ENCODE measurements at regions of chr19 and their contacts with region 1.

Region 1: DNA sequence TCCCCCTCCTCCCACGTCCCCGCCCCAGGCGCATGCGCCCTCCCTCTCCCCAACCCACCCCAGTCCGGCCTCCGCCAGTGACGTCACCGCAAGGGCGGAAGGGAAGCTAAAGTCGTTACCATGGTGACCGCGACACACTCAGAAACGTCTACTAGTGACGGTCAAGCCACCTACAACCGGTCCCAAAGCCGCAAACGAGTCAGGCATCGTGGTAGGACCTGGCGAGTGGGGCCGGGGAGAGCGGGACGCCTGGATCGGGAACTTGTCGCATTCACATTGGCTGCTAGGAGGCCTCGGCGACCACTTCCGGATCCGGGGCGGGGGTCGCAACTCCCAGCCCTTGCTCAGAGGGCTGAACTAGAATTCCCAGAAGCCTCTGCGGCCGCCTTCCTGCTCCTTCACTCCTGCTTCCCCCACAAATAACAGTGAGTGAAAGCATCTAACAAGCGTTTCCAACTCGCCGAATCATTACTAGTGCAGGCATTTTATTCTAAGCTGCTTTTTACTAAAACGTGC is at the start of gene ZSCAN5A:
- DNase-seq: peak; percentile 89
- ATAC-seq: peak; percentile 87
- H3K4me3 ChIP-seq: peak within 1 kb of the TSS; percentile 92
- H3K27ac ChIP-seq: peak within 1 kb of the TSS; percentile 98
- H3K4me1 ChIP-seq: peaks cover 3% of the 10 kb centered on the region
- H3K27me3 ChIP-seq: no peaks in the 10 kb centered on the region
- CTCF ChIP-seq: no peak
- EP300 ChIP-seq: no peak
- POLR2A ChIP-seq: peak; percentile 90
- RAD21 ChIP-seq: no peak
- polyA plus RNA-seq, gene ZSCAN5A: 5.5 to 6.6 TPM

Region 2: DNA sequence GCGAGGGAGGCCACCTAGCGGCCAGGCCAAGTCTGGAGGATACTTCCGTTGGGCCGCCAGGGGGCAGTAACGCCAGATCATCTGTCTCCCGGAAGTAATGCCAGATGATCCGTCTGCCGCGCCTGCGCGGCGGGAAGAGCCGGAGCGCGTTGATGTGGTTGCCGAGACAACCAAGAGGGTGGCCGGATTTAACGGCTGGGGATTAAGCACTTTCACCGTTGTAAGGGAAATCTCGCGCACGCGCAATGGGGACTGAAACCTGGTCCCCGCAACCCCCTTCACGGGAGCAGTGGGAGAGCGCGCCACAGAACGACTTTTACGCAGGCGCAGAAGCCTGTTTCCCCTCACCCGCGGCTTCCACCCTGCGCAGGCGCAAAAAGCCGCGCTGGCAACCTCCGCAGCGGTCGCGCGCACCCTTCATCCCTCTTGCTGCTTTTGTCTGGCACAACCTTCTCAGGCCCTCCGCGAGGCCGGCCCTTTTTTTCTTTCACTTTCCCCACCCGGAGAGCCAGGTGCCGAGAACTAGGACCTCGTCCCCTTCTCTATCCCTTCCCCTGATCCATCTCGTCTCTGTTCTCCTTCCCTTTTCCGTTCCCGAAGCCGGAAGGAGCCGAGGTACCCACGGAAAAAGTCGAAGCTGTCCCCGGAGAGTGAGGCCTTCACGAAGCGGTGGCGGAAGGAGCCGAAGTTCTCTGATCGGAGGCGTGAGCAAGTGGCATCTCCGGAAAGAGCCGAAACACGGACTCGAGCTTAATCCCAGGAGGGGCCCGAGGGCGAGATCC is 660.7 kb before region 1 on chr19:
- CTCF ChIA-PET with region 1: interaction called, 3 read pairs
- POLR2A ChIA-PET with region 1: interaction called, 6 read pairs
- RAD21 ChIA-PET with region 1: no interaction called
- SMC1A ChIA-PET with region 1: no interaction called
- in situ Hi-C with region 1: loop called (anchors 5 kb)
- intact Hi-C with region 1: no loop called
- DNase-seq: peak; percentile 95
- ATAC-seq: peak; percentile 83
- H3K4me3 ChIP-seq: peak overlapping the region; percentile 75
- H3K27ac ChIP-seq: peak overlapping the region; percentile 100
- H3K4me1 ChIP-seq: peaks cover 19% of the 10 kb centered on the region
- H3K27me3 ChIP-seq: no peaks in the 10 kb centered on the region
- CTCF ChIP-seq: peak; percentile 100; a peak in 5 of 6 replicates
- EP300 ChIP-seq: no peak
- POLR2A ChIP-seq: peak; percentile 80
- RAD21 ChIP-seq: peak; percentile 57; the same call in 1 of the 2 replicates

Region 3: GRCh38 chr19:56080669-56081401 is 233.8 kb before region 1 on chr19:
- CTCF ChIA-PET with region 1: interaction called, 9 read pairs
- POLR2A ChIA-PET with region 1: no interaction called
- RAD21 ChIA-PET with region 1: no interaction called
- SMC1A ChIA-PET with region 1: no interaction called
- in situ Hi-C with region 1: loop called (anchors 5 kb)
- intact Hi-C with region 1: loop called (anchors 1 kb)
- DNase-seq: peak; percentile 38
- ATAC-seq: peak; percentile 89
- H3K4me3 ChIP-seq: peak overlapping the region; percentile 61; the same call in 1 of the 2 replicates
- H3K27ac ChIP-seq: peak overlapping the region; percentile 3; the same call in 1 of the 2 replicates
- H3K4me1 ChIP-seq: peaks cover 5% of the 10 kb centered on the region; the same call in 1 of the 2 replicates
- H3K27me3 ChIP-seq: no peaks in the 10 kb centered on the region
- CTCF ChIP-seq: peak; percentile 64 to 69 (median 64)
- EP300 ChIP-seq: peak; percentile 57 to 58; a peak in 1 of 4 replicates
- POLR2A ChIP-seq: peak; percentile 62; the same call in 1 of the 2 replicates
- RAD21 ChIP-seq: peak; percentile 60

Region 4: DNA sequence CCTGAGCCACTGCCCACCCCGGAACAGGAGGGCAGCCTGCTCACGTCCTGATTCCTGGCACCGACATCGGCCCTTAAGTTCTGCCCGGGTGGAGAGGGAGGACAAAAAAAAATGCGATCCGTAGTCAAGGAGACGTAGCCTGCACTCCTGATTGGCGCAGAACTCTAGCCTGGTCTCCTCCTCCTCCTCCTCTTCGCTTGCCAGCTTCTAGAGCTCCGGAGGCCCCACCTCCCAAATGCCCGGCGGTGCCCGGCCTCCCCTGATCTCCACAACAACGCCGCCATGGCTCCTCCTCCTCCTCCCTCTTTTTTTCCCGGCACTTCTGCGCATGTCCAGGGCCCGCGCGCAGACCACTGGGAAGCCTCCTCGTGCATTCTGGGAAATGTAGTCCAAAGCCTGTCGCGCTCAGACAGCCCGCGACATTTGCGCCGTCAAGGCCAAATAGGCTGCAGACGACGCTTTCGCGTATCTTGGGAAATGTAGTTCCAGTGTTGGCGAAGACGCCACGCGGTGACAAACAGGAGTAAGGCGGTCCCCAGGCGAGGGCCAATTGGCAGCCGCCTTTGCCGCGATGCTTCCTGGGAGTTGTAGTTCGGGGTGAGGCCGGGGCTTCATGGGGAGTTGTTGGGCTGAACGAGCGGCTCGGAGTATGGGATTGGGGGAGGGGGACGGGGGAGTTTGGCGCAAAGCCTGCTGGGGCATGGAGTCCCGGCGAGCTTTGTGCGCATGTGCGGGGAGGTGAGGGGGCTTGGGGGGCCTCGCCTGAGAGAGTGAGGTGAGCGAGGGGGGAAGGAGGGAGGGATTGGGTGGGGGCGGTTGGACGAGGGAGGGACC is 173.8 kb before region 1 on chr19 and contains the start of gene ZNF444:
- CTCF ChIA-PET with region 1: interaction called, 3 read pairs
- POLR2A ChIA-PET with region 1: no interaction called
- RAD21 ChIA-PET with region 1: no interaction called
- SMC1A ChIA-PET with region 1: no interaction called
- in situ Hi-C with region 1: no loop called
- intact Hi-C with region 1: loop called (anchors 1 kb)
- DNase-seq: peak; percentile 97
- ATAC-seq: peak; percentile 96
- H3K4me3 ChIP-seq: peak within 1 kb of the TSS; percentile 75
- H3K27ac ChIP-seq: peak within 1 kb of the TSS; percentile 82
- H3K4me1 ChIP-seq: peaks cover 15% of the 10 kb centered on the region
- H3K27me3 ChIP-seq: no peaks in the 10 kb centered on the region
- CTCF ChIP-seq: no peak
- EP300 ChIP-seq: no peak
- POLR2A ChIP-seq: peak; percentile 76
- RAD21 ChIP-seq: no peak
- polyA plus RNA-seq, gene ZNF444: 0.45 to 0.99 TPM

Region 5: DNA sequence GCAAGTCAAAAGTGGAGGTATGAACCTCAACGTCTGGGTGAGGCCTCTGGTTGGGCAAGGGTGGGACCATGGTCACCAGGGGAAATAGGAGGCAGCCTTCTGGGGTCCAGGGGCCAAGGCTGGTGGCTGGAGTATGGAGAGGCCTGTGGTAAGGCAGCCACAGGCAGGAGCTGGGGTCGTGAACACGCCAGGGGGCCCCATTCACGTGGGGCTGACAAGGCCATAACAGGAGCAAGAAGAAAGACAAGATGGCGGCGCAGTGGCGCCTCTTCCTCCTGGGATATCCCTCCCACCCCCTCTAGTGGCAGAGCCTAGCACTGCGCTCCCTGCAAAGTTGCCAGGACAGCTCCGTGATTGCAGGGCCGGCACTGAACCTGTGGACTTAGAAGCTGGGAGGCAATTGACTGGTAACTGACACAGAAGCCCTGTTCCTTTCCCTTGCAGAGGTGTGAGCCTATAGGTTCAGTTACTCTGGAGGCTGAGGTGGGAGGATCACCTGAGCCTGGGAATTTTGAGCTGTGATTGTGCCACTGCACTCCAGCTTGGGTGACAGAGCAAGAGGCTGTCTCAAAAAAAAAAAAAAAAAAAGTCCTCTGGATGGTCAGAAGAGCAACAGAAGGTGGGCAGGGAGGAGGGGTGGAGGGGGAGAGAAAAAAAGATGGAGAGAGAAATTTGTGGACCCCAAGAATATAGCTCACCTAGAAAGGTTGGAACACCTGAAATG is 61.8 kb before region 1 on chr19:
- CTCF ChIA-PET with region 1: interaction called, 65 read pairs
- POLR2A ChIA-PET with region 1: no interaction called
- RAD21 ChIA-PET with region 1: interaction called, 21 read pairs
- SMC1A ChIA-PET with region 1: interaction called, 4 read pairs
- in situ Hi-C with region 1: no loop called
- intact Hi-C with region 1: no loop called
- DNase-seq: no peak
- ATAC-seq: peak; percentile 84
- H3K4me3 ChIP-seq: no peak overlapping the region
- H3K27ac ChIP-seq: no peak overlapping the region
- H3K4me1 ChIP-seq: no peaks in the 10 kb centered on the region
- H3K27me3 ChIP-seq: no peaks in the 10 kb centered on the region
- CTCF ChIP-seq: peak; percentile 61 to 86 (median 78)
- EP300 ChIP-seq: no peak
- POLR2A ChIP-seq: no peak
- RAD21 ChIP-seq: peak; percentile 56

Region 6: GRCh38 chr19:56301182-56301581 is 13.4 kb before region 1 on chr19:
- CTCF ChIA-PET with region 1: interaction called, 19 read pairs
- POLR2A ChIA-PET with region 1: no interaction called
- RAD21 ChIA-PET with region 1: no interaction called
- SMC1A ChIA-PET with region 1: no interaction called
- in situ Hi-C with region 1: no loop called
- intact Hi-C with region 1: no loop called
- DNase-seq: no peak
- ATAC-seq: no peak
- H3K4me3 ChIP-seq: no peak overlapping the region
- H3K27ac ChIP-seq: no peak overlapping the region
- H3K4me1 ChIP-seq: no peaks in the 10 kb centered on the region
- H3K27me3 ChIP-seq: no peaks in the 10 kb centered on the region
- CTCF ChIP-seq: no peak
- EP300 ChIP-seq: no peak
- POLR2A ChIP-seq: no peak
- RAD21 ChIP-seq: no peak

Region 7: GRCh38 chr19:56350416-56351045 is 35.9 kb after region 1 on chr19:
- CTCF ChIA-PET with region 1: interaction called, 13 read pairs
- POLR2A ChIA-PET with region 1: no interaction called
- RAD21 ChIA-PET with region 1: no interaction called
- SMC1A ChIA-PET with region 1: no interaction called
- in situ Hi-C with region 1: no loop called
- intact Hi-C with region 1: no loop called
- DNase-seq: peak; percentile 11
- ATAC-seq: peak; percentile 48; the same call in 2 of the 3 replicates
- H3K4me3 ChIP-seq: no peak overlapping the region
- H3K27ac ChIP-seq: no peak overlapping the region
- H3K4me1 ChIP-seq: no peaks in the 10 kb centered on the region
- H3K27me3 ChIP-seq: no peaks in the 10 kb centered on the region
- CTCF ChIP-seq: peak; percentile 74 to 84 (median 78); a peak in 5 of 6 replicates
- EP300 ChIP-seq: no peak
- POLR2A ChIP-seq: no peak
- RAD21 ChIP-seq: peak; percentile 53

Region 8: DNA sequence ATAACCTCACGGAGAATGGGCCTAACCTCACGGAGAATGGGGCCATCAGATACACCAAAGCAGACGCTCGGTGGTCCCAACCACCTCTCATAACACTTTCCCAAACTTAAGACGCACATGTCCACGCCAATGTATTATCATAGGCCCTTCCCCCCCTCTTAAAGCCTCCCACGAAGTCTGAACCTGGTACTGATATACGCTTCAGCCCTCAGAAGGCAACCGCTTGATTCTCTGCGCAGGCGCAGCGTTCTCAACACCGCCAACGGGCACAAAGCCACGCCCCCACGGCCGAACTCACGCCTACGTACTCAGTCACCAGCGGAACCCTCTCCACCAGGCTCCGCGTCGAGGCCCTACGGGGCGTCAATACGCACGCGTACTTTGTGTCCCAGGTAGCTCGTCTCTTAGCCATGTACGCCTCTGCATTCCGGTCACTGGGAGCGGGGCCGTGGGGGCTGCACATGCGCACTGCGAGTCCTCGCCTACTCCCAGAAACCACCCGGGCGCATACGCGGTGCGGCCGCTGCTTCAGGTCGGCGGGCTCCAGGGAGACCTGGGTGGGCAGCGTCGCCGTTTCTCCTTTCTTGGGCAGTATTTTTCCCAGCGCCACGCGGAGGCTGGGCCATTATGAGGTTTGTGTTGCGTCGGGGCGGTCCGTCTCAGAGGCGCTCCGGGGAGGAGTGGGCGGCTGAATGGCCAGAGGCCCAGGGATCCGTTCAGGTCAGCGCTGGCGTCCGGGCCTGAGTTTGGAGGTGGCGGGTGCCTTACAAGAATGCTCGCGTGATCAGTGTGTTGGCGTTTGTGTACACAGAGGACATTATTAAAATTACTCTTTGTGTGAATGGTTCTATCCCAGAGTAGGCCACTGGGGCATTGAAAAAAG is 53.5 kb after region 1 on chr19:
- CTCF ChIA-PET with region 1: no interaction called
- POLR2A ChIA-PET with region 1: no interaction called
- RAD21 ChIA-PET with region 1: no interaction called
- SMC1A ChIA-PET with region 1: no interaction called
- in situ Hi-C with region 1: no loop called
- intact Hi-C with region 1: no loop called
- DNase-seq: peak; percentile 40
- ATAC-seq: peak; percentile 90
- H3K4me3 ChIP-seq: peak overlapping the region; percentile 76
- H3K27ac ChIP-seq: no peak overlapping the region
- H3K4me1 ChIP-seq: no peaks in the 10 kb centered on the region
- H3K27me3 ChIP-seq: no peaks in the 10 kb centered on the region
- CTCF ChIP-seq: no peak
- EP300 ChIP-seq: no peak
- POLR2A ChIP-seq: peak; percentile 65
- RAD21 ChIP-seq: no peak

Region 9: DNA sequence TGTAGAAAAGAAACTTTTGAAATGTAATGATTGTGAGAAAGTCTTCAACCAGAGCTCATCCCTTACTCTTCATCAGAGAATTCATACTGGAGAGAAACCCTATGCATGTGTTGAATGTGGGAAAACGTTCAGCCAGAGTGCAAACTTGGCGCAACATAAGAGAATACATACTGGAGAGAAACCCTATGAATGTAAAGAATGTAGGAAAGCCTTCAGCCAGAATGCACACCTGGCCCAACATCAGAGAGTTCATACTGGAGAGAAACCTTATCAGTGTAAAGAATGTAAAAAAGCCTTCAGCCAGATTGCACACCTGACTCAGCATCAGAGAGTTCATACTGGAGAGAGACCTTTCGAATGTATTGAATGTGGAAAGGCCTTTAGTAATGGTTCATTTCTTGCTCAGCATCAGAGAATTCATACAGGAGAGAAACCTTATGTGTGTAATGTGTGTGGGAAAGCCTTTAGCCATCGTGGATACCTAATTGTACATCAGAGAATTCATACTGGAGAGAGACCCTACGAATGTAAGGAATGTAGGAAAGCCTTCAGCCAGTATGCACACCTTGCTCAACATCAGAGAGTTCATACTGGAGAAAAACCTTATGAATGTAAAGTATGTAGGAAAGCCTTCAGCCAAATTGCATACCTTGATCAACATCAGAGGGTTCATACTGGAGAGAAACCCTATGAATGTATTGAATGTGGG is 108.8 kb after region 1 on chr19:
- CTCF ChIA-PET with region 1: no interaction called
- POLR2A ChIA-PET with region 1: no interaction called
- RAD21 ChIA-PET with region 1: no interaction called
- SMC1A ChIA-PET with region 1: no interaction called
- in situ Hi-C with region 1: no loop called
- intact Hi-C with region 1: no loop called
- DNase-seq: no peak
- ATAC-seq: no peak
- H3K4me3 ChIP-seq: no peak overlapping the region
- H3K27ac ChIP-seq: no peak overlapping the region
- H3K4me1 ChIP-seq: no peaks in the 10 kb centered on the region
- H3K27me3 ChIP-seq: no peaks in the 10 kb centered on the region
- CTCF ChIP-seq: no peak
- EP300 ChIP-seq: no peak
- POLR2A ChIP-seq: no peak
- RAD21 ChIP-seq: no peak

Measured in GM12878 (cell line).